MCF 10A (cell line): ENCODE measurements at regions of chr10 and their contacts with region 1.

Region 1: GRCh38 chr10:74888962-74889663 is 62.7 kb downstream of the KAT6B start:
- DNase-seq: peak; percentile 30
- H3K4me3 Mint-ChIP-seq: no peak overlapping the region
- H3K27ac Mint-ChIP-seq: no peak overlapping the region
- H3K4me1 Mint-ChIP-seq: no peaks in the 10 kb centered on the region
- H3K27me3 Mint-ChIP-seq: no peaks in the 10 kb centered on the region
- CTCF ChIP-seq: no peak

Region 2: GRCh38 chr10:74991440-74992130 is 102.5 kb after region 1 on chr10:
- CTCF ChIA-PET with region 1: no interaction called
- POLR2A ChIA-PET with region 1: no interaction called
- intact Hi-C with region 1: loop called (anchors 10 kb)
- DNase-seq: peak; percentile 6
- H3K4me3 Mint-ChIP-seq: no peak overlapping the region
- H3K27ac Mint-ChIP-seq: no peak overlapping the region
- H3K4me1 Mint-ChIP-seq: no peaks in the 10 kb centered on the region
- H3K27me3 Mint-ChIP-seq: no peaks in the 10 kb centered on the region
- CTCF ChIP-seq: no peak

Region 3: DNA sequence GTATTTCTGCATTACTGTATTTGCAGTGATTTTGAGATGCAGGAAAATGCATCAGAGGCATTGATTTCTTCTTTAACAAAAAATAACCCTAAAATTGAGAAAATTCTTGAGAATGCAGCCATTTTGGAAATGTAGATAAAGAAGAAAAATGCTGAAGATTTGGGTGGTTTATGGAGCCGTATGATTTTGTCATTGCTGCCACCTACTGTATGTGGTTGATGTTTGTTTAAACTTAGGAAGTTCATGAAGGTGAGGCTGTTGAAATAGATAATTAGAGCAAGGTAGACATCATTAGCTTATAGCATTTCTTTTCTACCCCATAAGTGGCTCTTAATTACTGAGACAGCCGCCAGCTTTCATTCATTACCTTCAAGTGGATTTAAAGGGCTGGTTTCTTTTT is 130.3 kb after region 1 on chr10:
- CTCF ChIA-PET with region 1: interaction called, 4 read pairs
- POLR2A ChIA-PET with region 1: no interaction called
- intact Hi-C with region 1: loop called (anchors 1 kb)
- DNase-seq: peak; percentile 38
- H3K4me3 Mint-ChIP-seq: no peak overlapping the region
- H3K27ac Mint-ChIP-seq: no peak overlapping the region
- H3K4me1 Mint-ChIP-seq: no peaks in the 10 kb centered on the region
- H3K27me3 Mint-ChIP-seq: no peaks in the 10 kb centered on the region
- CTCF ChIP-seq: peak; percentile 47